AG04450 (cell line): ENCODE measurements at regions of chr15 and their contacts with region 1.

Region 1: DNA sequence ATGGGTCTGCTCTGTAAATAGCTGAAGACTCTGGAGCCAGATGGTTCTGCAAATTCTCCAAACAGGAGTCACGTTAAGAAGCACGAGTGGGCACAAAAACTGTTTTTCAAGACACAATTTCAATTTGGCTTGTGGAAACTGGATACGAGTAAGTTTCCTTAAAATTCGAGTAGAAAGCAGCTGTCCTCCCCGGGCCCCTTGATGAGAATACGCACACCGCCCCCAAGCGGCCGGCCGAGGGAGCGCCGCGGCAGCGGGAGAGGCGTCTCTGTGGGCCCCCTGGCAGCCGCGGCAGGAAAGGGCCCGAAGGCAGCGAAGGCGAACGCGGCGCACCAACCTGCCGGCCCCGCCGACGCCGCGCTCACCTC is 778 bp upstream of the THBS1 start:
- DNase-seq: peak; percentile 95
- H3K4me3 ChIP-seq: peak overlapping the region; percentile 99
- H3K27ac ChIP-seq: peak overlapping the region; percentile 99
- H3K27me3 ChIP-seq: no peaks in the 10 kb centered on the region
- CTCF ChIP-seq: peak; percentile 92

Region 2: GRCh38 chr15:39127925-39128617 is 452.0 kb before region 1 on chr15:
- CTCF ChIA-PET with region 1: no interaction called
- POLR2A ChIA-PET with region 1: interaction called, 10 read pairs
- DNase-seq: peak; percentile 86
- H3K4me3 ChIP-seq: no peak overlapping the region
- H3K27ac ChIP-seq: peak overlapping the region; percentile 94
- H3K27me3 ChIP-seq: no peaks in the 10 kb centered on the region
- CTCF ChIP-seq: no peak

Region 3: GRCh38 chr15:39180483-39180933 is 399.6 kb before region 1 on chr15:
- CTCF ChIA-PET with region 1: interaction called, 14 read pairs
- POLR2A ChIA-PET with region 1: interaction called, 55 read pairs
- DNase-seq: peak; percentile 77
- H3K4me3 ChIP-seq: no peak overlapping the region
- H3K27ac ChIP-seq: peak overlapping the region; percentile 71
- H3K27me3 ChIP-seq: no peaks in the 10 kb centered on the region
- CTCF ChIP-seq: no peak

Region 4: DNA sequence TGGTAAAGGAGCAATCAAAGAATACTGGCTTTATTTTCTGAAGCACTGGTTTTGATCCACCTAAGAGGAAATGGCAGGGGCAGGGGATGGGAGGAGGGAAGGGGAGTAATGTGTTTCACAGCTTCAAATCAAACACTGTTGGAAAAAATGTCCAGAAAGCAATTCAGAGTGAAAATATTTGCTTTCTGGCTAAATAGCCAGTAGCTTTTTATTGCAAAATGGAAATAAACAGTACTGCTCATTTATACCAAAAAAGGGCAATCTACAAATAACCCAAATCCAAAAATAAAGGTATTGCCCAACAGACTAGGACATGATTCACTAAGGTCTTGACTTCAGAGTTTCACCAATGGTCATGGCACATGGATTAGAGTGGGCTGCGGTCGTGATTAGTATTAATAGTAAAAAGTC is 278.5 kb before region 1 on chr15:
- CTCF ChIA-PET with region 1: interaction called, 6 read pairs
- POLR2A ChIA-PET with region 1: interaction called, 86 read pairs
- DNase-seq: no peak
- H3K4me3 ChIP-seq: no peak overlapping the region
- H3K27ac ChIP-seq: peak overlapping the region; percentile 69
- H3K27me3 ChIP-seq: no peaks in the 10 kb centered on the region
- CTCF ChIP-seq: no peak

Region 5: DNA sequence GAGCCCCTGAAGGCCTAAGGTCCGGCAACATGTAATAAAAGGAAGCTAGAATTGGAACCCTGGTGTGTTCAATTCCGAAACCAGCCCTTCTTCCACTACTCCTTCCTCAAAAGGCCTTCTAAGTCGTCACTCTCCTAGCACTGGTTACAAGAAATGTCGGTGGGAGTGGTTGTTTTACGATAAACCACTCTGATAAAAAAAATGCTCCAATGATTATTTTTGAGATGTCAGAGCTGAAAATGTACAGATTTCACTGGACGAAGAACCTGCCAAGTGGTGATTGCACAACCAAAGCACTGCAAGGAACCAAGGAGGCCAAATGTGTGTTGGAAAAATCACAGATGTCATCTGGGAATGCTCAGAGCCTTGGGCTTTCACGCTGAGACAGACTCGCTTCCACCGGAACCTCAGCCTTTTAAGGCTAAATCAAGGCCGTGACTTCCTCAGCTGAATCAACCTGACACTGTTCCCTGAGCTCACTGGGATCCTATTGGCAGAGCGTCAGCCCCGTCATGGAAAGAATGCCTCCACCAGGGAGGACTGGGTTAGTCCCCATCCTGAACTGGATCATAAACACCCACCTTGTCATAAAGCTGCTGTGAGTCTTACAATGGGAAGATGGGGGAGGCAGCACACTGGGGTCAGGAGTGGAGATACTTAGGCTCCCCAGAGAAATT is 107.3 kb before region 1 on chr15:
- CTCF ChIA-PET with region 1: interaction called, 3 read pairs
- POLR2A ChIA-PET with region 1: interaction called, 43 read pairs
- DNase-seq: peak; percentile 97
- H3K4me3 ChIP-seq: no peak overlapping the region
- H3K27ac ChIP-seq: peak overlapping the region; percentile 94
- H3K27me3 ChIP-seq: no peaks in the 10 kb centered on the region
- CTCF ChIP-seq: no peak

Region 6: GRCh38 chr15:39511000-39511915 is 68.8 kb before region 1 on chr15:
- CTCF ChIA-PET with region 1: interaction called, 4 read pairs
- POLR2A ChIA-PET with region 1: interaction called, 14 read pairs
- DNase-seq: peak; percentile 77
- H3K4me3 ChIP-seq: peak overlapping the region; percentile 12
- H3K27ac ChIP-seq: peak overlapping the region; percentile 68
- H3K27me3 ChIP-seq: no peaks in the 10 kb centered on the region
- CTCF ChIP-seq: no peak

Region 7: GRCh38 chr15:39602143-39602542 is 22.0 kb after region 1 on chr15:
- CTCF ChIA-PET with region 1: no interaction called
- POLR2A ChIA-PET with region 1: interaction called, 11 read pairs
- DNase-seq: no peak
- H3K4me3 ChIP-seq: no peak overlapping the region
- H3K27ac ChIP-seq: no peak overlapping the region
- H3K27me3 ChIP-seq: no peaks in the 10 kb centered on the region
- CTCF ChIP-seq: 0 out of 2 replicates have a peak, but pooled peaks have one; percentile 12

Region 8: DNA sequence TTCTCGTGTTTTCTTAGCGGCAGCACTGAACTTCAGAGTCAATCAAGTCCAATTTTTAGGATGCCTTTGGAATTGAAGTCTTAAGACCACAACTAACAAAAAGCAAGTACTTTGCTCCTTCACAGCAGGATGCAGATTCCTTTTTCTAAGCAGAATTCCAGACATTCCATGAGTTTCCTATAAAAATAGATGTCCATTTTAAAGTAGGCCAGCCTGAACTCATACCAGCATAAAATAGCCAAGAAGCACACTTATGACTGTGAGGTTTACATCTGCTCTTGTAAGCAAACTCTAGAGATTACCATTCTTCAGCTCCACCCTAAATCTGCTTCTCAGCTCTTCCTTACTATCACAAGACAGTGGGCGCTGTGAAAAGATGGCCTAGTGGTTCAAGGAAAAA is 86.6 kb after region 1 on chr15:
- CTCF ChIA-PET with region 1: no interaction called
- POLR2A ChIA-PET with region 1: no interaction called
- DNase-seq: peak; percentile 38
- H3K4me3 ChIP-seq: no peak overlapping the region
- H3K27ac ChIP-seq: no peak overlapping the region
- H3K27me3 ChIP-seq: no peaks in the 10 kb centered on the region
- CTCF ChIP-seq: no peak

Region 9: DNA sequence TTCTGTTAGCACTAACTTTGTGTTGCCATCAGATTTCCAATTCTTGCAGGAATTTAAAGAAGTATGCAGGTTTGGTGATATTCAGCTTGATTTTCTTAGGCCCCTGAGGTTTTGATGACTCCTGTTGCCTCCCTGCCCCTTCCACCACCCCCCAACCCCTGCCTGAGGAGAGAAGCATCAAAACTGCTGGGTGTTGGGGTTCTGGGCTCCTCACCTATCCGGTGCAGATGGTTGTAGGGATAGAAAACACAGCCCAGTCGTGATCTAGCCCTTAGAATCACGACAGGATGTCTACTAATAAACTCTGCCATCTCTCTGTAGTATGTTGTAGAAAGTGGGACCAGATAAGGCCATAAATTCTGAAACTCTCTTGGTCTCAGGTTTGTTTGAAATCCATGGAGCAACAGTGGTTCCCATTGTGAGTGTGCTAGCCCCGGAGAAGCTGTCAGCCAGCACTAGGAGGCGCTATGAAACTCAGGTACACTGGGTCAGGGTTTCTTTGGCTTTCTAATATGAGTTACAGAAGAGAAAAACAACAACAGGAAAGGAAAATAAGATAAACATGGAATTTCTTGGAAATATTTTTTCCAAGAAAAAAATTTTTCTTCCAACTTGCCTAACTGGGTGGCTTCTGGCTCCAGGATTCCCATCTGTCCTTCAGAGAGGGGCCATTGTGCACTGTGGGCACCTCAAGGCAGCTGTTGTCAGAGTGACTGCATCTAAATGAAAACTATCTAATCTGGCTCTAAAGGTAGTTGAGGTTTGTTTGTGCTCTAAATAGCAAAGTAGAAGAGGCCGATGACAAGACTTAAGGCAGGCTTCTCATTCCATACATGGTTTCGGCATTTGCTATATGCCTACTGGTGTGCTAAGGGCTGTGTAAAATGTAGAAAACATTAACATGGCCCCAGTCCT is 450.1 kb after region 1 on chr15:
- CTCF ChIA-PET with region 1: no interaction called
- POLR2A ChIA-PET with region 1: no interaction called
- DNase-seq: no peak
- H3K4me3 ChIP-seq: no peak overlapping the region
- H3K27ac ChIP-seq: no peak overlapping the region
- H3K27me3 ChIP-seq: no peaks in the 10 kb centered on the region
- CTCF ChIP-seq: peak; percentile 73